GM12878 (cell line): ENCODE measurements at regions of chr18 and their contacts with region 1.

Region 1: DNA sequence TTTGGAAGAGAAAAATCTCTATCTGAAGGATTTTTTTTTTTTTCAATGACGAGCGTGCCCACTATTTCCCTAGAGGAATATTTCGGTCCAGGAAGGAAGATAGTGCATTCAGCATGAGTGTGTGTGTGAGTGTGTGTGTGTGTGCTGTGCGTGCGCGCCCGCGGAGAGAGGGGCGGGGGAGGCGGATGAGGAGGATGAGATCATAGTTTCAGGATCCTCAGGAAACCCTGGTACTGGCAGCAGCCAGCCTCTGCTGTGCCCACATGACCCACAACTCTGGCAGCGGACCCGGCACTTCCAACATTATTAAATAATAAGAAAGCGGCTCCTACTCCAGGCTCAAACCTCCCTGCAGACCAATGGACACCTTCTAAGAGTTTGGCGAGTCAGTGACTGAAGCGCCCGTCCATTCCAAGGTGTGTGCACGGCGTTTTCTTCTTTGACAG is 217.0 kb upstream of the DTNA start:
- DNase-seq: no peak
- ATAC-seq: peak; percentile 73
- H3K4me3 ChIP-seq: peak overlapping the region; percentile 57; the same call in 1 of the 2 replicates
- H3K27ac ChIP-seq: no peak overlapping the region
- H3K4me1 ChIP-seq: no peaks in the 10 kb centered on the region
- H3K27me3 ChIP-seq: no peaks in the 10 kb centered on the region
- CTCF ChIP-seq: no peak
- EP300 ChIP-seq: peak in 1 of 2 experiments; percentile 49; a peak in 1 of 4 replicates
- POLR2A ChIP-seq: no peak
- RAD21 ChIP-seq: no peak

Region 2: DNA sequence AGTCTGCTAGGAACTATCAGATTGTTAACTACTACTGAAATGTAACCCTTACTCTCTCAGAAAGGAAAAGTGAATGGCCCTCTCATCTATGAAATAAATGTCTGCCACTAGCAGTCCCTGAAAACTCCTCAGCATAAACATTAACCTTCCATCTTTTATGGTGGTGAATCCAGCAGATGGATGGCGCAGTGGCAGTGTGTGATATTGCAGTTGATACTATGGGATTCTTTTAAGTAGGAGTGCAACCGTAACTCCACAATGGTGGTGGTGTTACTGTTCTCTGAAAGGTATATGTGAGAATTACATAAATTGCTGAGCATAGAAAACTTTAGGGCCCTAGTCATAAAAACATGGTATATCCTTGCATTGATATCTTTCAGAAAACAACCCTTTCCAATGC is 19.3 kb after region 1 on chr18:
- CTCF ChIA-PET with region 1: interaction called, 3 read pairs
- POLR2A ChIA-PET with region 1: interaction called, 6 read pairs
- RAD21 ChIA-PET with region 1: interaction called, 9 read pairs
- SMC1A ChIA-PET with region 1: interaction called, 13 read pairs
- in situ Hi-C with region 1: no loop called
- intact Hi-C with region 1: no loop called
- DNase-seq: no peak
- ATAC-seq: 0 out of 3 replicates have a peak, but pooled peaks have one; percentile 18
- H3K4me3 ChIP-seq: no peak overlapping the region
- H3K27ac ChIP-seq: no peak overlapping the region
- H3K4me1 ChIP-seq: no peaks in the 10 kb centered on the region
- H3K27me3 ChIP-seq: no peaks in the 10 kb centered on the region
- CTCF ChIP-seq: no peak
- EP300 ChIP-seq: no peak
- POLR2A ChIP-seq: no peak
- RAD21 ChIP-seq: no peak